ENCODE measurements at regions of chr18 and their contacts with region 1.

Region 1: DNA sequence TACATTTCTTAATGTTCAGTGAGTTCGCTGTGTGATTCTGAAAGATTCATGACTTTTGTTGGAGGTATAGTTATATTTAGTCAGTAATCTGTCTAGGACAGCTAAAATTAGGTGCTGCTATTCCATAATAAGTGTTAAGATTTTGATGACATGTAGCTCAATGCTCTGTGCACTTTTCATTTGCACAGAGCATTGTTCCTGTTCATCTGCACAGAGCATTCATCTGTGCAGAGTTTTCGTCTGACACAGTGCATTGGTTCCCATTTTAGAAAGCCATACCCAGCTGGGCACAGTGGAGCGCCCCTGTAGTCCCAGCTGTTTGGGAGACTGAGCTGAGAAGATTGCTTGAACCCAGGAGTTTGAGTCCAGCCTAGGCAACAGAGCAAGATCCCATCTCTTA is 8.6 kb downstream of the POLI start:
- DNase-seq: no peak
- H3K4me3 ChIP-seq: no peak overlapping the region
- H3K27ac ChIP-seq: no peak overlapping the region
- H3K4me1 ChIP-seq: no peaks in the 10 kb centered on the region
- H3K27me3 ChIP-seq: no peaks in the 10 kb centered on the region

Region 2: GRCh38 chr18:54224379-54225014 is 53.4 kb before region 1 on chr18 and contains the start of gene MBD2:
- CTCF ChIA-PET with region 1: interaction called, 11 read pairs
- POLR2A ChIA-PET with region 1: no interaction called
- DNase-seq: peak; percentile 95 to 98 (median 98)
- H3K4me3 ChIP-seq: peak within 1 kb of the TSS; percentile 60 to 86 (median 77)
- H3K27ac ChIP-seq: peak within 1 kb of the TSS; percentile 68 to 78
- H3K4me1 ChIP-seq: peaks cover 14 to 24% (median 18%) of the 10 kb centered on the region in 4 experiments
- H3K27me3 ChIP-seq: no peaks in the 10 kb centered on the region

Measured in common myeloid progenitor, CD34-positive (primary cell).